ENCODE measurements at regions of chr11 and their contacts with region 1.

Region 1: DNA sequence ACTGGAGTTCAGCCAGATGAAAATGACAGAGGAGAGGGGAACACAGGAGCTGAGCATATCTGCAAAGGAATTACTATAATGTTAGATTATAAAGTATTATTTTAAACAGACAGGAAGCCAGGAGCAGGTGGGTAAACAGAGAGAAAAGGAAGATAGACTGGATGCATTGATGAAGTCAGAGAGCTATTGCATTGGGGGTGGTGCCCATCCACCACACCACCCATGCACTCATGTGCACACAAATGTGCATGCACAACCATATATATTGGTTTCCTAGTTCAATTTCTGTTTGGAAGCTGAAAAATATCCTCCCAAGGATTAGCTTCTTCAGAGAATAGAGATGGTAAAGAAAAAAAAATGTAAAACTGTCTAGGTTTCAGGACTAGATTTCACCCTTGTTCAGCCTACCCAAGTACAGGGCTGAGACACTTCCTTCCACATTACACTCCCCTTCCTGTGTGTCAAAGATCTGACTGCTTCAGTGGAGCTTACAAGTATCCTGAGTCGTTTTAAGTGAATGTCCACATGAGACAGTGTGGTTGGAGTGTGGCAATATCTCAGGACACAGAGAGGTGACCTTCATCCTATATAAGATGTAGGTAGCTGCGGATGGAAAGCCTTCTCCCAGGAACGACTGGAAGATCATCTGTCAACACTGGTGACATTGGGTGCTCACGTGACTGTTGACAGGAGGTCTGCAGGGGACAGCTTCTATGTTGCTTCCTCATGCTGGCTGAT is 12.2 kb upstream of the SMPD1 start:
- DNase-seq: no peak
- H3K4me3 ChIP-seq: no peak overlapping the region
- H3K27ac ChIP-seq: no peak overlapping the region
- H3K27me3 ChIP-seq: peaks cover 2% of the 10 kb centered on the region
- CTCF ChIP-seq: no peak

Region 2: DNA sequence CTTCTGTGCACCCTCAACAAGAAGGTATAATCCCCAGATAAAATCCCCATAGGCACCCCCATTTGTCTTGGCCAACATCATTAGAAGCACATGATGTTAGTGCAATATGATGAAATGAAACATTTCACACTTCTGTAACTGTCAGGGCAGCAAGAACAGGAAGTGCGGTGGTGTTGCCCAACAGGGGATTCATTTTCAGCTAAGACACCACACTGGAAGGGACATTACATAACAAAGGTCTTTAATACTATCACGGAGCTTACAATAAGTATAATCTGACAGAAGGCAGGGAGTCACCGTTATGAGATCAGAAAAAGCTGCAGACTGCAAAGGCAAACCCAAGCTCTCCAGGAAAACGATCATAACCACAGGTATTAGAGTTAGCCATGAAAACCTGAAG is 177.1 kb before region 1 on chr11:
- CTCF ChIA-PET with region 1: no interaction called
- POLR2A ChIA-PET with region 1: no interaction called
- DNase-seq: no peak
- H3K4me3 ChIP-seq: no peak overlapping the region
- H3K27ac ChIP-seq: no peak overlapping the region
- H3K27me3 ChIP-seq: peaks cover 2% of the 10 kb centered on the region
- CTCF ChIP-seq: no peak

Region 3: DNA sequence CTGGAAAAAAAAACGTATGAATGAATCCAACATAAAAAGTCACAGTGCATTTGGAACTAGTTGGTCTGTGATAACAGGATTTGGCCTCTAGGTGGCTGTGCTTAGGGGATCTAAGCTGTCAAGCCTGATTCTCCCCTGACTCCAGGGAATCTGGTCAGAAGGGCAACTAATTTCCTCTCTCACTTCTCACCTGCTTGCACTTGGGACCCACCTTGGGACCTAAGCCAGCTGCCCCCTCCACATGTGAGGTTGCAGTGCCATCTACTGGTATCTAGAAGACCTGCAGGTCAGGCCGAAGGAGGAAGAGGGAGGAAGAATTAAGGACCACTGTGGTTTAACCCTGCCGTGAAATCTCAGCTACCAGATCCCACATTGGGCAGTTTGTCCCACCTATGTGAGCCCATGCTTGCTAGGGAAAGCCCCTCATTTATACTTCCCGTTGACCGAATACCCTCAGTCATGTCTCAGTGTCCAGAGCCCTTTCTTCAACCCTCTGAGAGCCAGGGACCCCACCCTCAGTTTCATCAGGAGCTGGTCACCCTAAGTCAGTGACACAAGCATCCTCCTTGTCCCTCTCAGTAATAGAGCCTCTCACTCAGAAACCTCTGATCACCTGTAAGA is 24.6 kb before region 1 on chr11:
- CTCF ChIA-PET with region 1: interaction called, 26 read pairs
- POLR2A ChIA-PET with region 1: no interaction called
- DNase-seq: no peak
- H3K4me3 ChIP-seq: no peak overlapping the region
- H3K27ac ChIP-seq: no peak overlapping the region
- H3K27me3 ChIP-seq: no peaks in the 10 kb centered on the region
- CTCF ChIP-seq: peak; percentile 98

Region 4: DNA sequence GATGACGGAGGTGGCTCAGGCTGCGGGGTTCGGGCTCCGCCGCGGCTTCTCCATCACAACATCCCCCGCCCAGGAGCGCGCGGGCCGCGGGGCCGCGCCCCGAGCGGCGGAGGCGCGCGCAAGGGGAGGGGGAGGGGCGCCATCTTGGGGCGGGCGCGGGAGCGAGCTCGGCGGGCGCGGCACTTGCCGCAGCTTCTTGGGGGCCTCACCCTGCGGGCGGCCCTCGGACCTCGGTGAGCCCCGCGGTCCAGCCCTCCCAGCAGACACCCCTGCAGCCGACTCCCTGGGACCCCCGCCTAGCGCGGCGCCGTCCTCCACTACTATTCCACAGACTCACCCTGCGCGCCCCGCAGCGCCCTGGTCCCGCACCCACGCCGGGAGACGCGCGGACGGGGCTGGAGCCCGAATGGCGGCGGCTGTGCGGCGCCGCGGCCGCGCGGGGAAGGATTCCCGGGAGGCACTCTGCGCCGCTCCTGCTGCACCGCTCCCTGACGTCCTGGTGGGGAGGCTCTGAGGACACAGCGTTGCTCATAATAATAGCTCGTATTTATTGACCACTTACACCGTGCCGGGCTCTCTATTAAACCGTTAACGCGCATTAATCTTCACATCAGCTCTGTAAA is 41.0 kb after region 1 on chr11 and contains the start of gene APBB1:
- CTCF ChIA-PET with region 1: interaction called, 29 read pairs
- POLR2A ChIA-PET with region 1: no interaction called
- DNase-seq: no peak
- H3K4me3 ChIP-seq: peak within 1 kb of the TSS; percentile 80
- H3K27ac ChIP-seq: no peak within 1 kb of the TSS
- H3K27me3 ChIP-seq: no peaks in the 10 kb centered on the region
- CTCF ChIP-seq: 0 out of 2 replicates have a peak, but pooled peaks have one; percentile 8
- polyA plus RNA-seq, gene APBB1: 42.2 and 54.5 TPM in 2 replicates

Region 5: GRCh38 chr11:6458352-6459098 is 80.5 kb after region 1 on chr11:
- CTCF ChIA-PET with region 1: interaction called, 20 read pairs
- POLR2A ChIA-PET with region 1: no interaction called
- DNase-seq: no peak
- H3K4me3 ChIP-seq: no peak overlapping the region
- H3K27ac ChIP-seq: no peak overlapping the region
- H3K27me3 ChIP-seq: no peaks in the 10 kb centered on the region
- CTCF ChIP-seq: no peak

Region 6: GRCh38 chr11:6523253-6523652 is 145.2 kb after region 1 on chr11:
- CTCF ChIA-PET with region 1: interaction called, 11 read pairs
- POLR2A ChIA-PET with region 1: no interaction called
- DNase-seq: no peak
- H3K4me3 ChIP-seq: no peak overlapping the region
- H3K27ac ChIP-seq: no peak overlapping the region
- H3K27me3 ChIP-seq: no peaks in the 10 kb centered on the region
- CTCF ChIP-seq: no peak

Region 7: GRCh38 chr11:6705905-6706535 is 327.9 kb after region 1 on chr11:
- CTCF ChIA-PET with region 1: interaction called, 55 read pairs
- POLR2A ChIA-PET with region 1: no interaction called
- DNase-seq: no peak
- H3K4me3 ChIP-seq: no peak overlapping the region
- H3K27ac ChIP-seq: no peak overlapping the region
- H3K27me3 ChIP-seq: no peaks in the 10 kb centered on the region
- CTCF ChIP-seq: peak; percentile 98